Caco-2 (cell line): ENCODE measurements at regions of chr12 and their contacts with region 1.

Region 1: DNA sequence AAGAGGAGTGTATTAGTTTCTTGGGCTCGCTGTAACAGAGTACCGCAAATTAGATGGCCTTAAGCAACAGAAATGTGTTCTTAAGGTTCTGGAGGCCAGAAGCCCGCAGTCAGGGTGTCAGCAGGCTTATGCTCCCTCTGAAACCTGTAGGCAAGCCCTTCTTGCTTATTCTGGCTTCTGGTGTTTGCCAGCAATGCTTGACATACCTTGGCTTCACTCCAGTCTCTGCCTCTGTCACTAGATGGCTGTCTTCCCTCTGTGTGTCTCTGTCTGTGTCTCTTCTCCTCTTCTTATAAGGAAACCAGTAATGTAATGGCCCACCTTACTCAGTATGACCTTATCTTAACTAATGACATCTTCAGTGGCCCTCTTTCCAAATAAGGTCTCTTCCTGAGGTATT is 85.1 kb downstream of the DERA start:
- DNase-seq: peak in 1 of 2 experiments; percentile 58
- H3K4me3 ChIP-seq: no peak overlapping the region
- H3K4me3 Mint-ChIP-seq: no peak overlapping the region
- H3K27ac Mint-ChIP-seq: no peak overlapping the region
- H3K4me1 ChIP-seq: no peaks in the 10 kb centered on the region; the same call in 1 of the 2 replicates
- H3K4me1 Mint-ChIP-seq: peaks cover 4% of the 10 kb centered on the region
- H3K27me3 ChIP-seq: no peaks in the 10 kb centered on the region
- H3K27me3 Mint-ChIP-seq: no peaks in the 10 kb centered on the region
- CTCF ChIP-seq: peak; percentile 34 to 51

Region 2: GRCh38 chr12:16030729-16031128 is 34.5 kb after region 1 on chr12:
- CTCF ChIA-PET with region 1: no interaction called
- POLR2A ChIA-PET with region 1: no interaction called
- intact Hi-C with region 1: loop called (anchors 1 kb)
- DNase-seq: peak; percentile 80 to 81
- H3K4me3 ChIP-seq: no peak overlapping the region
- H3K4me3 Mint-ChIP-seq: no peak overlapping the region
- H3K27ac Mint-ChIP-seq: peak overlapping the region; percentile 81
- H3K4me1 ChIP-seq: peaks cover 24% of the 10 kb centered on the region
- H3K4me1 Mint-ChIP-seq: peaks cover 23% of the 10 kb centered on the region
- H3K27me3 ChIP-seq: no peaks in the 10 kb centered on the region
- H3K27me3 Mint-ChIP-seq: no peaks in the 10 kb centered on the region
- CTCF ChIP-seq: no peak

Region 3: GRCh38 chr12:16076553-16076952 is 80.3 kb after region 1 on chr12:
- CTCF ChIA-PET with region 1: no interaction called
- POLR2A ChIA-PET with region 1: no interaction called
- intact Hi-C with region 1: loop called (anchors 2 kb)
- DNase-seq: peak in 1 of 2 experiments; percentile 38
- H3K4me3 ChIP-seq: no peak overlapping the region
- H3K4me3 Mint-ChIP-seq: no peak overlapping the region
- H3K27ac Mint-ChIP-seq: no peak overlapping the region
- H3K4me1 ChIP-seq: peaks cover 7% of the 10 kb centered on the region
- H3K4me1 Mint-ChIP-seq: no peaks in the 10 kb centered on the region
- H3K27me3 ChIP-seq: no peaks in the 10 kb centered on the region
- H3K27me3 Mint-ChIP-seq: peaks cover 6% of the 10 kb centered on the region
- CTCF ChIP-seq: peak; percentile 60 to 63

Region 4: GRCh38 chr12:16121953-16122352 is 125.7 kb after region 1 on chr12:
- CTCF ChIA-PET with region 1: no interaction called
- POLR2A ChIA-PET with region 1: no interaction called
- intact Hi-C with region 1: loop called (anchors 2 kb)
- DNase-seq: no peak
- H3K4me3 ChIP-seq: no peak overlapping the region
- H3K4me3 Mint-ChIP-seq: no peak overlapping the region
- H3K27ac Mint-ChIP-seq: no peak overlapping the region
- H3K4me1 ChIP-seq: no peaks in the 10 kb centered on the region; the same call in 1 of the 2 replicates
- H3K4me1 Mint-ChIP-seq: peaks cover 18% of the 10 kb centered on the region
- H3K27me3 ChIP-seq: no peaks in the 10 kb centered on the region
- H3K27me3 Mint-ChIP-seq: no peaks in the 10 kb centered on the region
- CTCF ChIP-seq: no peak

Region 5: GRCh38 chr12:16359512-16360491 is 363.5 kb after region 1 on chr12:
- CTCF ChIA-PET with region 1: no interaction called
- POLR2A ChIA-PET with region 1: no interaction called
- intact Hi-C with region 1: loop called (anchors 1 kb)
- DNase-seq: peak; percentile 79 to 87
- H3K4me3 ChIP-seq: no peak overlapping the region
- H3K4me3 Mint-ChIP-seq: no peak overlapping the region
- H3K27ac Mint-ChIP-seq: no peak overlapping the region
- H3K4me1 ChIP-seq: no peaks in the 10 kb centered on the region
- H3K4me1 Mint-ChIP-seq: no peaks in the 10 kb centered on the region
- H3K27me3 ChIP-seq: no peaks in the 10 kb centered on the region
- H3K27me3 Mint-ChIP-seq: no peaks in the 10 kb centered on the region
- CTCF ChIP-seq: peak; percentile 95 to 98